ENCODE measurements at regions of chr1 and their contacts with region 1.

Region 1: DNA sequence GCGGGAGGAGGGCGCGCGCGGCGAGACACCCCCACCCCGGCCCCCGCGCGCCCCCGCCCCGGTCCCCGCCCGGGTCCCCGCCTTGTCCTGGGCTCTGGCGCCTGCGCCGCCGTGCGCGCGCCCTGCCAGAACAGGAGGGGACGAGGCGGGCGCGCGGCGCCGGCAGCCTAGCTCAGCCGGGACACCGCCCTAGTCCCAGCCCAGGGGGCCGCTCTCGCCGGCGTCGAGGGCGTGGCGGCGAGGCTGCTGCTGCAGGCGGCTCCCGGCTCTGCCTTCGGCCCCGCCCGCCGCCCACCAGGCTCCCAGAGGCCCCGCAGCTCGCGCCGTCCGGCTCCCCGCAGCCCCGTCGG is at the start of gene RCAN3:
- DNase-seq: peak; percentile 26 to 75
- H3K4me3 ChIP-seq: peak within 1 kb of the TSS; percentile 69 to 87
- H3K27ac ChIP-seq: peak within 1 kb of the TSS in 1 of 2 donors; percentile 52
- H3K4me1 ChIP-seq: peaks cover 0 to 3% of the 10 kb centered on the region in 2 donors
- H3K27me3 ChIP-seq: no peaks in the 10 kb centered on the region
- CTCF ChIP-seq: no peak
- total RNA-seq, gene RCAN3: 2.0 TPM

Region 2: GRCh38 chr1:24047101-24047459 is 455.6 kb before region 1 on chr1:
- intact Hi-C with region 1: loop called (anchors 5 kb)
- DNase-seq: peak in 1 of 2 donors; percentile 89
- H3K4me3 ChIP-seq: no peak overlapping the region
- H3K27ac ChIP-seq: peak overlapping the region in 1 of 2 donors; percentile 4
- H3K4me1 ChIP-seq: peaks cover 0 to 22% of the 10 kb centered on the region in 2 donors
- H3K27me3 ChIP-seq: no peaks in the 10 kb centered on the region
- CTCF ChIP-seq: no peak

Region 3: DNA sequence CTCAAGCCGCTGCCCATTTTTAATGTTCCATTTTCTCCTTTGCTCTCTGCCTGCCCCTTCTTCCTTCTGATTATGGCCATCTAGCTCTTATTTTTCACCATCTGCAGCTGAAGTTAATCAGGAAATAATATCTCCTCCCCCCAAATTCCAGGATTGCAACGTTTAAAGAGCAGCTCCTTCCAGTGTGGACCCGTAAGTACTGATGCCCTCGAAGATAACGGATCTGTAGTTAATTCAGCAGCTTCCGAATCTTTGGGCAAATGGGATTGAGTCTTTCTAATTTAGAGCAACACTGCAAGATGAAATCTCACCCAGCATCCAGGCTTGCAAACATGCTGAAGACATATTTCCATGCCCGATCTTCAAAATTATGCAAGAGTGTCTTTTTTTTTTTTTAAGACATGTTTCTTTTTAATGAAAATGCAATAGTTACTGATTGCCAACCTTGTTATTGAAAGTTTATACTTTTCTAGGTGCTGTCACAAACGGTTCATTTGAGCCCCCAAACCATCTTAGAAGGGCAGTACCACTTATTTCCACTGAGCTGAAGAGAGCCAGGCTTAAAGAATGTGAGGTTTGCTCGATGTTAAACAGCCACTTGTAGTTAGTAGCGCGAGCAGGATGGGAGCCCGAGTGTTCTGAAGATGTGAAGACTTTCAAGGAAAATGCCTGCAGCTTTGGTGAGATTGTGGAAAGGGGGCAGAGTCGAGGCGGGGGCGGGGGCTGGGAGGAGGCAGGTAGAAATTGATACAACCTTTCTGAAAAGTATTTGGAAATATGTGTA is 10.9 kb before region 1 on chr1:
- intact Hi-C with region 1: no loop called
- DNase-seq: no peak
- H3K4me3 ChIP-seq: no peak overlapping the region
- H3K27ac ChIP-seq: no peak overlapping the region
- H3K4me1 ChIP-seq: no peaks in the 10 kb centered on the region
- H3K27me3 ChIP-seq: no peaks in the 10 kb centered on the region
- CTCF ChIP-seq: no peak